ENCODE measurements at regions of chr7 and their contacts with region 1.

Region 1: DNA sequence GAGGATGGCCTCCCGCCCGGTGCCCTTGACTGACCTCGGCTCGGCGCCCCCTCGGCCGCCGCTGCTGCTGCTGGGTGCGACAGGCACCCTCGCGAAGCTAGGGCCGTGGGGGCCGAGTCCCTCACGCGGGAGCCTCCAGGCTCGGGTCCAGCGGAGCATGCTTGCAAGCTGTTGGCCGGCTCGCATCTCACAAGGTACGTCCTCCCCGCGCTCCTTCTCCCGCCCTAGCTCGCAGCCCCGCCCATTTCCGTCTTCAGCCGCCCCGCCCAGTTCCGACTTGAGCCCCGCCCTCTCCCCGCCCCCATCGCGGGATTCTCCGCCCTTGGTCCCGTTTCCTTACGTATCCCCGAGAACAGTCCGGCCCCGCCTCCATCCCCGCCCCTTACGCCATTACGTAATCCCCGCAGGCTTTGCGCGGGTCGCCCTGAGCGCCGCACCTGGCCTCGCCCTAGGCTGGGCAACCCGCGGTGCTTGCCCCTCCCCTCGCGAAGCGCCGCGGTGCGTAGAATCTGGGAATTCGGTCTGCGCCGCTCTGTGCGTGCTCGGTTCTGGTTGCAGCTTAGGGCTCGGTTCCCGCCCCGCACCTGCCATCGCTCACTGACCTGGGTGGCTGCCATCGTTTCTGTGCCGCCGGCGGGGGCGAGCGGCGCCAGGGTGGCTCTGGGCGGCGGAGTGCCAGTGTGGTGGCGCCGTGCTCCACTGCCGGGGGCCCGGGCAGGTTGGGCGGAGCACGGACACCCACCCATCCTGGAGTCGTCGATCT is at the start of gene ABHD11:
- DNase-seq: peak; percentile 89 to 98
- ATAC-seq: peak; percentile 64 to 78
- H3K4me3 ChIP-seq: peak within 1 kb of the TSS; percentile 78
- H3K27ac ChIP-seq: peak within 1 kb of the TSS; percentile 88 to 96
- H3K4me1 ChIP-seq: peaks cover 24% of the 10 kb centered on the region
- CTCF ChIP-seq: no peak
- EP300 ChIP-seq: no peak
- POLR2A ChIP-seq: peak; percentile 78
- RAD21 ChIP-seq: peak in 1 of 2 experiments; percentile 41; a peak in 3 of 5 replicates
- polyA plus RNA-seq, gene ABHD11: 8.1 and 10.4 TPM in 2 replicates

Region 2: DNA sequence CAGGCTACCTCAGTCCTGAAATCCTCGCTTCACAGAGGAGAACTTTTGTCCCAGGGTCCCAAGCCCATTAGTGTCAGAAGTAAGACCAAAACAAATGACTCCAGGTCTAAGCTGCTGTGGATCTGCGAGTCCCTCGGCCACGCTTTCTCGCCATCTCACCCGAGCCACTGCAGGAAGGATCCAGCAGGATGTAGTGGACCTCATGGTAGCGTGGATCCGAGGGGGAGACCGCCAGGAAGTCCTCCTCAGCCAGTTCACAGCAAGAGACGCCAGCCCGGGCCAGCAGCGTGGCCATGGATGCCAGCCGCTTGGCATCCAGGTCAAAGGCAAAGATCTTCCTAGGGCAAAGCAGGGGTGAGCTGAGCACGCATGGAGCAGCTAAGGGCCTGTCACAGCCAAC is 434.7 kb before region 1 on chr7:
- CTCF ChIA-PET with region 1: no interaction called
- POLR2A ChIA-PET with region 1: no interaction called
- DNase-seq: no peak
- ATAC-seq: no peak
- H3K4me3 ChIP-seq: no peak overlapping the region
- H3K27ac ChIP-seq: no peak overlapping the region
- H3K4me1 ChIP-seq: peaks cover 7% of the 10 kb centered on the region; the same call in 2 of the 3 replicates
- CTCF ChIP-seq: no peak
- EP300 ChIP-seq: no peak
- POLR2A ChIP-seq: no peak
- RAD21 ChIP-seq: no peak

Region 3: GRCh38 chr7:73599151-73599882 is 139.5 kb before region 1 on chr7:
- CTCF ChIA-PET with region 1: interaction called, 273 read pairs
- POLR2A ChIA-PET with region 1: no interaction called
- DNase-seq: no peak
- ATAC-seq: peak in 1 of 2 experiments; percentile 36; a peak in 2 of 6 replicates
- H3K4me3 ChIP-seq: no peak overlapping the region
- H3K27ac ChIP-seq: no peak overlapping the region; a peak in 1 of 6 replicates
- H3K4me1 ChIP-seq: no peaks in the 10 kb centered on the region
- CTCF ChIP-seq: no peak
- EP300 ChIP-seq: no peak
- POLR2A ChIP-seq: no peak
- RAD21 ChIP-seq: no peak

Region 4: DNA sequence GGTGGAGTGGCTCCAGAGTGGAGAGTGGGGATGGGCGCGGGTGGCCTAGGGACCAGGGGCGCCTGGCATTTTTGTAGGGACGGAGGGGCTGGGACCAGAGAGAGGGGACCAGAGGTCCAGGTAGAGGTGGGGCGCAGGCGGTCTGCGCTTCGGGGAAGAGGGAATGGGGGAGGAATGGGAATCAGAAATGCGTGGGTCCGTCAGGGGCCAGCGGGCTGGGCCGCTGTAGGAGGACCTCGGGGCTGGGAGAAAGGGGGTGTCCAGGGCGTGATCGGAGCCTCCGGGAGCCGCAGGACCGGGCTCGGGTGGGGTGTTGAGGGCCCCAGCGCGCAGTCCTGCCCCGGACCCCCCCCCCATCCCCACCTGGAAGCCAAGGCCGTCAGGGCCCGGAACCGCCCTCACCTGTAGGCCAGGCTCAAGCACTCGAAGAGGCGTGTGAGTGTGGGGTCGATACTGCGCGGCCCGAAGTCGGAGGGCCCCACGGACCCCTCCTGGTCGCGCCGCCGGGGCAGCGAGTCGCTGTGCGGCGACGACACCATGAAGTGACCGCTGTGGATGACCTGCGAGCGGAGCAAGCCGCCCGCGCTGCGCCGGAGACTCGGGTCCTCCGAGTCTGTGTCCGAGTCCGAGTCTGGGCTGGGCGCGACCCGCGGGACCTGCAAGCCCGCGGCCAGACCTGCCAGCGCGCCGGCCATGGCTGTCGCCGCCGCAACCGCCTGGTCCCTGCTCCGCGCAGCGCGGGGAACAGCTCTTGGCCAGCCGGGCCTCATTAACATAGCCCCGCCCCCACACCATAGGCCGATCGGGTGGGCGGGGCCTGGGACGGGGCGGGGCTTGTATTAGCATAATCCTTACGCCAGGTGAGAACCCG is 114.8 kb before region 1 on chr7 and contains the start of gene MLXIPL:
- CTCF ChIA-PET with region 1: interaction called, 45 read pairs
- POLR2A ChIA-PET with region 1: interaction called, 3 read pairs
- DNase-seq: peak; percentile 78 to 97
- ATAC-seq: peak; percentile 84 to 90
- H3K4me3 ChIP-seq: peak within 1 kb of the TSS; percentile 55
- H3K27ac ChIP-seq: peak within 1 kb of the TSS; percentile 71 to 92
- H3K4me1 ChIP-seq: peaks cover 25% of the 10 kb centered on the region
- CTCF ChIP-seq: no peak
- EP300 ChIP-seq: no peak
- POLR2A ChIP-seq: peak; percentile 48; the same call in 1 of the 2 replicates
- RAD21 ChIP-seq: no peak
- polyA plus RNA-seq, gene MLXIPL: 1.4 and 2.2 TPM in 2 replicates

Region 5: DNA sequence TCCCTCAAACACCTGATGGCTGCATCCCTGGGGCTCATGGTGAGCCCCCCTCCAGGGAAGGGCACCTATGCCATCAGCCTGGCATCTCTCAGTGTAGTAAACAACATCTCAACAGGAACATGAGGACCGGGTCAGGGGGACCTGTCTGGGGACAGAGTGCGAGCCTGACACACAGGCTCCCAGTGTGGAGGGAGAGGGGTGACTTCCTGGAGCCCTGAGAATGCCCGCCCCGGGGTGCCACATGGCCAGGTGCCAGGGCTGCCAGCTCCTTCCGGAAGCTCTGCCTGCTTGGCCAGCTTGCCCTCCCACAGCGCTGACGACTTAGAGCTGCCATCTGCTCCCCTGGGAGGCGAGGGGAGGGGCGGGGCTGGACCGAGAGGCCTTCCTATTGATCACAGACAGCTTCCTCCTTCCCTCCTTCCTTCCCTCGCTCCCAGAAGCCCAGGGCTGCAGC is 31.6 kb before region 1 on chr7:
- CTCF ChIA-PET with region 1: interaction called, 31 read pairs
- POLR2A ChIA-PET with region 1: interaction called, 3 read pairs
- DNase-seq: peak; percentile 87 to 98
- ATAC-seq: peak; percentile 19 to 48
- H3K4me3 ChIP-seq: peak overlapping the region; percentile 30; the same call in 2 of the 3 replicates
- H3K27ac ChIP-seq: peak overlapping the region; percentile 99 to 100
- H3K4me1 ChIP-seq: peaks cover 93% of the 10 kb centered on the region
- CTCF ChIP-seq: no peak
- EP300 ChIP-seq: peak; percentile 88 to 91; a peak in 4 of 5 replicates
- POLR2A ChIP-seq: no peak
- RAD21 ChIP-seq: no peak; a peak in 2 of 5 replicates

Region 6: GRCh38 chr7:73828107-73828803 is 89.5 kb after region 1 on chr7:
- CTCF ChIA-PET with region 1: interaction called, 7 read pairs
- POLR2A ChIA-PET with region 1: interaction called, 10 read pairs
- DNase-seq: peak; percentile 67 to 86
- ATAC-seq: peak; percentile 76 to 79
- H3K4me3 ChIP-seq: no peak overlapping the region
- H3K27ac ChIP-seq: peak overlapping the region; percentile 67 to 86
- H3K4me1 ChIP-seq: peaks cover 65% of the 10 kb centered on the region
- CTCF ChIP-seq: no peak
- EP300 ChIP-seq: no peak
- POLR2A ChIP-seq: no peak
- RAD21 ChIP-seq: no peak

Region 7: DNA sequence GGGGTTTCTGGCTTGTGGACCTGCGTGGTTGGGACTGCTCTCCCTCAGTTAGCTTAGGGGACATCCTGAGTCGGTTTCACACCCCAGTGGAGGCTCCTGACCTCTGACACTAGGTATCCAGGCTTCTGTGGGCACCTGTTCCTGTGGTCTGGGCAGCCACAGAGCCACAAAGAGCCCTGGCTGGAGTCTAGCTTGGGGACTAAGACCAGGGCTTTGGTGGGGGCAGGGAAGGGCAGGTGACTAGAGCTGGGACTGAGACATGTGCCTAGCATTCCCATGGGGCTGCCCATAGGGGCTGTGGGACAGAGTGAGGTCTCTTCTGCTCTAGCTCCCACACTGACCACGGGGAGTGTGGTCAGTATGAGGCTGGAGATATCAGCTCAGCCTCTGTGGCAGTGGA is 118.1 kb after region 1 on chr7:
- CTCF ChIA-PET with region 1: interaction called, 47 read pairs
- POLR2A ChIA-PET with region 1: interaction called, 4 read pairs
- DNase-seq: no peak
- ATAC-seq: no peak
- H3K4me3 ChIP-seq: no peak overlapping the region
- H3K27ac ChIP-seq: no peak overlapping the region; a peak in 1 of 6 replicates
- H3K4me1 ChIP-seq: peaks cover 8% of the 10 kb centered on the region
- CTCF ChIP-seq: no peak
- EP300 ChIP-seq: no peak
- POLR2A ChIP-seq: no peak
- RAD21 ChIP-seq: no peak

Region 8: GRCh38 chr7:74153758-74154157 is 415.0 kb after region 1 on chr7:
- CTCF ChIA-PET with region 1: no interaction called
- POLR2A ChIA-PET with region 1: no interaction called
- DNase-seq: no peak
- ATAC-seq: no peak
- H3K4me3 ChIP-seq: no peak overlapping the region
- H3K27ac ChIP-seq: no peak overlapping the region
- H3K4me1 ChIP-seq: no peaks in the 10 kb centered on the region
- CTCF ChIP-seq: no peak
- EP300 ChIP-seq: no peak
- POLR2A ChIP-seq: no peak
- RAD21 ChIP-seq: no peak